H1 (cell line): ENCODE measurements at regions of chr11 and their contacts with region 1.

Region 1: DNA sequence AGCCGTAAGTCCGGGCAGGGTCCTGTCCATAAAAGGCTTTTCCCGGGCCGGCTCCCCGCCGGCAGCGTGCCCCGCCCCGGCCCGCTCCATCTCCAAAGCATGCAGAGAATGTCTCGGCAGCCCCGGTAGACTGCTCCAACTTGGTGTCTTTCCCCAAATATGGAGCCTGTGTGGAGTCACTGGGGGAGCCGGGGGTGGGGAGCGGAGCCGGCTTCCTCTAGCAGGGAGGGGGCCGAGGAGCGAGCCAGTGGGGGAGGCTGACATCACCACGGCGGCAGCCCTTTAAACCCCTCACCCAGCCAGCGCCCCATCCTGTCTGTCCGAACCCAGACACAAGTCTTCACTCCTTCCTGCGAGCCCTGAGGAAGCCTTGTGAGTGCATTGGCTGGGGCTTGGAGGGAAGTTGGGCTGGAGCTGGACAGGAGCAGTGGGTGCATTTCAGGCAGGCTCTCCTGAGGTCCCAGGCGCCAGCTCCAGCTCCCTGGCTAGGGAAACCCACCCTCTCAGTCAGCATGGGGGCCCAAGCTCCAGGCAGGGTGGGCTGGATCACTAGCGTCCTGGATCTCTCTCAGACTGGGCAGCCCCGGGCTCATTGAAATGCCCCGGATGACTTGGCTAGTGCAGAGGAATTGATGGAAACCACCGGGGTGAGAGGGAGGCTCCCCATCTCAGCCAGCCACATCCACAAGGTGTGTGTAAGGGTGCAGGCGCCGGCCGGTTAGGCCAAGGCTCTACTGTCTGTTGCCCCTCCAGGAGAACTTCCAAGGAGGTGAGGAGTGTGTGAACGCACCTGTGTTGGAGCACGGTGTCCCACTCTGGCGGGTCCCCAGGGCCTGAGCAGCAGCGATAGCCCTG is at the start of gene TAGLN:
- DNase-seq: peak; percentile 83 to 86
- H3K4me3 ChIP-seq: peak within 1 kb of the TSS; percentile 37 to 58 (median 47)
- H3K27ac ChIP-seq: peak within 1 kb of the TSS; percentile 74; the same call in 1 of the 2 replicates
- H3K4me1 ChIP-seq: peaks cover 7 to 32% (median 28%) of the 10 kb centered on the region in 4 experiments
- H3K27me3 ChIP-seq: no peaks in the 10 kb centered on the region; a peak in 1 of 7 replicates
- CTCF ChIP-seq: no peak
- EP300 ChIP-seq: peak in 1 of 2 experiments; percentile 76; a peak in 1 of 3 replicates
- POLR2A ChIP-seq: peak; percentile 39 to 81
- RAD21 ChIP-seq: no peak
- total RNA-seq, gene TAGLN: 300 and 301 TPM in 2 replicates

Region 2: GRCh38 chr11:117171404-117172061 is 27.8 kb before region 1 on chr11:
- CTCF ChIA-PET with region 1: interaction called, 249 read pairs
- POLR2A ChIA-PET with region 1: interaction called, 10 read pairs
- DNase-seq: no peak
- H3K4me3 ChIP-seq: no peak overlapping the region
- H3K27ac ChIP-seq: no peak overlapping the region
- H3K4me1 ChIP-seq: no peaks in the 10 kb centered on the region
- H3K27me3 ChIP-seq: no peaks in the 10 kb centered on the region
- CTCF ChIP-seq: no peak
- EP300 ChIP-seq: no peak
- POLR2A ChIP-seq: peak in 1 of 2 experiments; percentile 36; a peak in 1 of 3 replicates
- RAD21 ChIP-seq: no peak

Region 3: DNA sequence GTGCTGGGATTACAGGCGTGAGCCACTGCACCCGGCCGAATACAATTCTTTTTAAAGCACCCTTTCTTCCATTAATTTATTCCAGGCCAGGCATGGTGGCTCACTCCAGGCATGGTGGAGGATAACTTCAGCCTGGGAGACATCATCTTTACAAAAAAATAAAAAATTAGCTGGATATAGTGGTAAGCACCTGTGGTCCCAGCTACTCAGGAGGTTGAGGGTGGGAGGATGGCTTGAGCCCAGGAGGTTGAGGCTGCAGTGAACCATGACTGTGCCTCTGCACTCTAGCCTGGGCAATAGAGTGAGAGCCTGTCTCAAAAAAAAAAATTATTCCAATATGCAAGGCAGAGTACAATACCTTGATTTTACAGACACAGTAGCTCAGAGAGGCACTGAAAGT is 11.3 kb after region 1 on chr11:
- CTCF ChIA-PET with region 1: interaction called, 449 read pairs
- POLR2A ChIA-PET with region 1: interaction called, 47 read pairs
- DNase-seq: no peak
- H3K4me3 ChIP-seq: no peak overlapping the region
- H3K27ac ChIP-seq: no peak overlapping the region
- H3K4me1 ChIP-seq: no peaks in the 10 kb centered on the region
- H3K27me3 ChIP-seq: no peaks in the 10 kb centered on the region
- CTCF ChIP-seq: no peak
- EP300 ChIP-seq: no peak
- POLR2A ChIP-seq: no peak
- RAD21 ChIP-seq: no peak

Region 4: DNA sequence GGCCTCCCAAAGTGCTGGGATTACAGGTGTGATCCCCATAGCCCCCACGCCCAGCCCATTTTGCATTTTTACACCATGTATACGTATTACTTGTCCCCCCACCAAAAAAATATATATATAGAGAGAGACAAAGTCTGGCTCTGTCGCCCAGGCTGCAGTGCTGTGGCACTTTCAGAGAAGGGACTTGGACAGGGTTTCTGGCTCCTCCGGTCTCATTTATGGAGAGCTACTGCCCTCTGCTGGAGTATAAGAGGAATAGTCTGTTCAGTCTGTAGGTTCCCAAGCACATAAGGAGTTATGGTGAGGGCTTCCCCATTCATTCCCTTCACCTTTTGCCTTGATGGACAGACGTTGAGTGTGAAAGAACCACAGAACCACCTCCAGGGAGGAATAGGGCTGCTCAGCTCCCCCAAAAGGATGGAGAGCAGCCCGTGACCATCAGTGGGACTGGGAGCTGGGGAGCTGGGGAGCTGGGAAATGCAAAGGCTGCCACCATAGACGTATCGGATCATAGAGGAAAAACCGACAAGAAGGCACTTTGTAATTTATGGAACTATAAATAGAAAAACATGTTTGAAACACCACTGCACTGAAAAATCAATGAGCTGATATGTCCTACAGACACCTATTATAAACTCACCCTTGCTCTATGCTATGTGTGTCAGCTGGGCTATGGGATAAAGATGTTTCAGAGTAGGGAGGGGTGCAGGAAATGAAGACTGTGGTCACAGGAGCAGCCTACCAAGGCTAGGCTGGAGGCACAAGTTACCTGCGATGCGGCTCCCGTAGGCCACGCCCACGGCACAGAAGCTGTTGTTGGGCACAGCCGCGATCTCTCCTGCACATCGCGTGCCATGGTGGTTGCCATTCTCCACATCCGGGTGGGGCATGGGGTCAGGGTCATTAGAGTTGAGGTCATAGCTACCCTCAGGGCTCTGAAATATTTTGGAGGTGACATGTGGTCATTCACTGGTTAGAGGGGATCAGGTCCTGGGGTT is 27.4 kb after region 1 on chr11:
- CTCF ChIA-PET with region 1: interaction called, 449 read pairs
- POLR2A ChIA-PET with region 1: interaction called, 11 read pairs
- DNase-seq: no peak
- H3K4me3 ChIP-seq: no peak overlapping the region
- H3K27ac ChIP-seq: no peak overlapping the region
- H3K4me1 ChIP-seq: peaks cover 0 to 6% (median under 1%) of the 10 kb centered on the region in 4 experiments; a peak in 2 of 7 replicates
- H3K27me3 ChIP-seq: no peaks in the 10 kb centered on the region
- CTCF ChIP-seq: peak; percentile 1 to 92 (median 78)
- EP300 ChIP-seq: no peak
- POLR2A ChIP-seq: no peak
- RAD21 ChIP-seq: peak; percentile 94

Region 5: DNA sequence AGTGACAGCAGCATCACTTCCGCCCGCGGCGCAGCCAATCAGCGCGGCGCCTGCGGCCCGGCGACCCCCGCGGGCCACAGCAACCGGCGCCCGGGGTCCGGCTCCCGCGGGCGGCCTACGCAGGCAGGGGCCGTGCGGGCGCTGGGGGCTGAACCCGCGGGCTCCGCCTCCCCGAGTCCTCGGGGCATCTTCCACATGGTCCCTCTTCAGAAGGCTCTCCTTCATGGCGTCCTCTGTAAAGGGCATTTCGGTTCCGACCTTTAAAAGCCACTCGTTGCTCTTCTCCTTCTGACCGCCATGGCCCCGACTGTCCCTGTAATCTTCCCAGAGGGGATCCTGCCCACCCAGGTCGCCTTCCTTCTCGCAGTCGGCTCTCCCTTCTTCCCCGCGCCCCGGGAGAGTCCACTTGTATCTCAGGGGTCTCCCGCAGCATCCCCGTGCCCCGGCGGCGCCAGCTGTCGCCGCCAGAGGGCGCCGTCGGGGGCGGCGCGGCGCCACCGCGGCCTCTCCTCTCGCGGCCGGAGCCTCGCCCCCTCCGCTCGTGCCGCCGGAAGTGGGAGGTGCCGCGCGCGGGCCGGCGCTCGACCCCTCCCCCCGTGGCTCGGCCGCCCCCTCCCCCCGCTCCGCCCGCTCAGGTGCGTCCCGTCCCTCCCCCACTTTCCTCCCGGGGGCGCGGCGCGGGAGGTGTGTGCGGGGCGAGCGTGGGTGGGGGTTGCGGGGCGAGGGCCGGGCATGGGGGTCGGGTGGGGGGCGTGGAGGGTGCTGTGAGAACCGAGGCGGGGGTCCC is 33.0 kb after region 1 on chr11 and contains the start of gene RNF214:
- CTCF ChIA-PET with region 1: interaction called, 449 read pairs
- POLR2A ChIA-PET with region 1: interaction called, 11 read pairs
- DNase-seq: peak; percentile 38 to 88
- H3K4me3 ChIP-seq: peak within 1 kb of the TSS; percentile 76 to 100 (median 96)
- H3K27ac ChIP-seq: peak within 1 kb of the TSS; percentile 71; the same call in 1 of the 2 replicates
- H3K4me1 ChIP-seq: peaks cover 0 to 8% (median 2%) of the 10 kb centered on the region in 4 experiments; a peak in 3 of 7 replicates
- H3K27me3 ChIP-seq: no peaks in the 10 kb centered on the region
- CTCF ChIP-seq: peak; percentile 81 to 97 (median 89)
- EP300 ChIP-seq: peak in 1 of 2 experiments; percentile 93; a peak in 2 of 3 replicates
- POLR2A ChIP-seq: peak in 1 of 2 experiments; percentile 39; a peak in 1 of 3 replicates
- RAD21 ChIP-seq: peak; percentile 9 to 53; a peak in 2 of 4 replicates
- total RNA-seq, gene RNF214: 33.7 and 35.6 TPM in 2 replicates